GM12878 (cell line): ENCODE measurements at regions of chr2 and their contacts with region 1.

Region 1: DNA sequence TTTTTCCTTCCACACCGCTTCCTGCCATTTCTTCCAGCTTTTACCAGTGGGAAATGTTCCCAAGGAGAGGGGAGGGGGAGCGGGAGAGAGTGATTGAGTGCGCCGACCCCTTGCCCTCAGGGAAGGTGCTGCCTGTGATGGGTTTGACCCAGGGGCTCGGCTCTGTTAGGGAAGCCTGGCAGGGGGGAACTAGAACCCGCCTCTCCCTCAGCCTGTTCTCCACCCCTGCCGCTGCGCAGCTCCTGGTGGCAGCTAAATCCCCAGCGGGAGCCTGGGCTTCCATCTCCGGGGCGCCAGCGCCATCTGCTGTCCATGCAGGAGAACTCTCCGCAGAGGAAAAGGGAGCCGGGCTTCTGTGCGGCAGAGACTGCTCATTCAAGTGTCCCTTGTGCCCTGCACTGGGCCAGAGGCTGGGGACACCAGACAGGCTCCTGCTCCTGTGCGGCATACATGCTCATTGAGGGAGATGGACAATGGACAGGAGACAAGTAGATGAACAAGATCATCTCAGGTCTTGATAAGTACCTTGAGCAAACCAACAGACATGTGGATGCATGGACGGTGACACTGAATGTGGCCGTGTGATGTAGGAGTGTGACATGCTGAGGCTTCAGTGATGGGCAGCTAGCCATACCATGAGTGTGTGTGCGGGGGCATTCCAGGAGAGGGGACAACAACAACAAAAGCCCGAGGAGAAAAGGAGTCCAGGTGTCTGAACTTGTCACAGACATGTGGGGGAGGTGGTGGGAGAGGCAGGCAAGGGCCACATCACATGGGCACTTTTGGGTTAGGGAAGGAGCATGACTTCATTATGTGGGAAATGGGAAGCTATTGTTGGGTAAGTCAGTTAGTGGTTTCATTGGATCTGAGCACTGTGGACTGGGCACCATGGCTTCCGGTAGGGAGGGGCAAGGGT is 13.3 kb downstream of the CHPF start:
- DNase-seq: no peak
- ATAC-seq: peak; percentile 98
- H3K4me3 ChIP-seq: no peak overlapping the region
- H3K27ac ChIP-seq: no peak overlapping the region
- H3K4me1 ChIP-seq: no peaks in the 10 kb centered on the region
- H3K27me3 ChIP-seq: peaks cover 6 to 16% of the 10 kb centered on the region in 2 experiments
- CTCF ChIP-seq: peak; percentile 93 to 99 (median 94); a peak in 5 of 6 replicates
- EP300 ChIP-seq: no peak
- POLR2A ChIP-seq: no peak
- RAD21 ChIP-seq: peak; percentile 99

Region 2: GRCh38 chr2:219459460-219460311 is 70.6 kb before region 1 on chr2:
- CTCF ChIA-PET with region 1: interaction called, 22 read pairs
- POLR2A ChIA-PET with region 1: no interaction called
- RAD21 ChIA-PET with region 1: interaction called, 11 read pairs
- SMC1A ChIA-PET with region 1: interaction called, 9 read pairs
- in situ Hi-C with region 1: no loop called
- intact Hi-C with region 1: loop called (anchors 1 kb)
- DNase-seq: no peak
- ATAC-seq: peak; percentile 89
- H3K4me3 ChIP-seq: no peak overlapping the region
- H3K27ac ChIP-seq: no peak overlapping the region
- H3K4me1 ChIP-seq: no peaks in the 10 kb centered on the region
- H3K27me3 ChIP-seq: peaks cover 0 to 2% of the 10 kb centered on the region in 2 experiments; a peak in 2 of 4 replicates
- CTCF ChIP-seq: peak; percentile 82 to 99 (median 86)
- EP300 ChIP-seq: no peak
- POLR2A ChIP-seq: no peak
- RAD21 ChIP-seq: peak; percentile 52

Region 3: DNA sequence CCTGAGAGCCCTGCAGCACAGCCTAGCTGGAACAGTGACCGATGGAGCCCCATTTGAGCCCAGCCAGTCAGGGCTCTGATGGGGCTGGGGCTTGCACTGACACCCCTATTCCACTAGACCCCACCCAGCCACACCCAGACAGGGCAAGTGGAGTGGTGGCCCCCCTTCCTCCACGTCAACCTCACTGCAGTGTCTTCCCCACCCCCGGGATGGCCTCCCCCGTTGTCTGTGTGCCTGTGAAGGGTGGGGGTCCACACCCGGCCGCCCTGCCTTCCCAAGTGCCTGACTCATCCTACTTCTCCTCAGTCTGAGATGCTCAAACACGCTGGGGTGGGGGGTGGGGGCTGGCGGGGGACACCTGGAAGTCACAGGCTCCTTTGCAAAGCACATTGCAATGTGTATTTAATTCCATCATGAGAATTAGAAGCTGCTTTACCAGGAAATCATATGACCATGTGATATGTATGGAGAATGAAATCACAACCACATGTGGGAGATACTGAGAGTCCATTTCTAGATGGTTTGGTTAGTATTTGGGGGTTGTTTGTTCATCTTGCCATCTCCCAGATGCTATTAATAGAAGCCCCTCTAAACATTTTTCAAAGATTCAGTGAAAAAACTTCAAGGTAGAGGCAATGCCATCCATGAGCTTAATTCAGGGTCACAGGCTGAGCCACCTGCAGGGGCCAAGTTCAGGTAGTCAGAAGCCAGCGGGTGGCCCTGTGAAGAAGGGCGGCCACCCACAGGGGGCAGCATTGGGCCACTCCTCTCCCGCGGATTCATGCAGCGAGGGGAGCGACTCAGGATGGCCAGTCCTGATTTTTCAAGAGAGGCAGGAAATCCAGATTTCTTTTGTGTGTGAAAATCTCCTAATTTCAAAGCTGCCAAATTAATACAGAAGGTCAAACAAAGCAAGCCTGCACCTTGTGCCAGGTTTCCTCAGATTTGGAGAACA is 54.3 kb before region 1 on chr2:
- CTCF ChIA-PET with region 1: interaction called, 25 read pairs
- POLR2A ChIA-PET with region 1: no interaction called
- RAD21 ChIA-PET with region 1: interaction called, 7 read pairs
- SMC1A ChIA-PET with region 1: no interaction called
- in situ Hi-C with region 1: no loop called
- intact Hi-C with region 1: loop called (anchors 1 kb)
- DNase-seq: no peak
- ATAC-seq: peak; percentile 87
- H3K4me3 ChIP-seq: no peak overlapping the region
- H3K27ac ChIP-seq: no peak overlapping the region
- H3K4me1 ChIP-seq: no peaks in the 10 kb centered on the region
- H3K27me3 ChIP-seq: no peaks in the 10 kb centered on the region; a peak in 2 of 4 replicates
- CTCF ChIP-seq: peak; percentile 63 to 75 (median 74)
- EP300 ChIP-seq: no peak
- POLR2A ChIP-seq: no peak
- RAD21 ChIP-seq: peak; percentile 54